Heart left ventricle (tissue), 16 donors: ENCODE measurements at regions of chr11 and their contacts with region 1.

Region 1: GRCh38 chr11:114159802-114160632 is 100.5 kb downstream of the ZBTB16 start:
- DNase-seq: peak; percentile 98 to 100 (median 99)
- ATAC-seq: peak; percentile 65 to 80 (median 72)
- H3K4me3 ChIP-seq: peak overlapping the region in 11 of 12 donors; percentile 18 to 46 (median 33)
- H3K27ac ChIP-seq: peak overlapping the region; percentile 87 to 100 (median 98)
- H3K4me1 ChIP-seq: peaks cover 54 to 99% (median 90%) of the 10 kb centered on the region in 12 donors
- H3K27me3 ChIP-seq: no peaks in the 10 kb centered on the region
- CTCF ChIP-seq: peak in 1 of 12 donors; percentile 9
- POLR2A ChIP-seq: peak; percentile 33 to 79

Region 2: DNA sequence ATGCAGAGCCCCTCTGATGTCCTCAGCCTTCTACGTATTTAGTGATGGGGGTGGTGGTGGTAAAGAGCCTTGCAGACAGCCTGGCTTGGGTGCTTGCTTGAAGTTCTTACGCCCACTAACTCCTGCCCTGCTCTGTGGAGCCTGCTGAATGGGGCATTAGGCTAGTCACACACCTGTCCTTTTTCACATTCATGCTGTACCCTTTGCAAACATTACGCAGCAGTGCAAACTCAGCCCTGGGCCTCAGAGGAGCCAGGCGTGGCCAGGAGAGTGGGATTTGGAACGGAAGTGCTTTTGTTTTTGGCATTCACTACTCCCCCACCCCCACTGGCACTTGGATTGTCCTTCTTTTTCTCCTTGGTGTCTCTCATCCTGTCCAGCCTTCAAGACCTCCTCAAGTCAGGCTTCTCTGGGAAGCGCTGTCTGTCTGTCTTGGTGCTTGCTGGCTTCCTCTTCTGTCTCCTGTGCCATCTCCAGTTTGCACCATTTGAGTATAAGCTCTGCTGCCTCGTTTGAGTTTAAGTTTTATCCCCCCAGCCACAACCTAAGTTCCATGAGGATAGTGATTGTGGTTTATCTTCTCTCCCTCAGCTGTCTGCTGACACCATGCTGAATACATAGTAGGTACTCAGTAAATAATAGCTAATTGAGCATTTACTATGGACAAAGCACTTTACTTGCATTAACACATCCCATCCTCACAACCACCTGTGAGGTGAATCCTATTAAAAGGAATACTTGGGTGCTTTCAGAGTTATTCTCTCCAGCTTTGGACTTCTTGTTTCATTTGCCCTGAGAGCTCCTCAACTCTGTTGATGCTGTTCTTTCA is 73.8 kb before region 1 on chr11:
- intact Hi-C with region 1: loop called in 3 of 10 experiments (anchors 2 to 5 kb)
- DNase-seq: no peak
- ATAC-seq: peak in 3 of 4 donors; percentile 20 to 34 (median 33)
- H3K4me3 ChIP-seq: no peak overlapping the region
- H3K27ac ChIP-seq: peak overlapping the region in 11 of 12 donors; percentile 9 to 85 (median 52)
- H3K4me1 ChIP-seq: peaks cover 38 to 100% (median 90%) of the 10 kb centered on the region in 12 donors
- H3K27me3 ChIP-seq: no peaks in the 10 kb centered on the region
- CTCF ChIP-seq: no peak
- POLR2A ChIP-seq: no peak